PC-9 (cell line): ENCODE measurements at regions of chr6 and their contacts with region 1.

Region 1: GRCh38 chr6:125197795-125198269 is 44.3 kb downstream of the TPD52L1 start:
- DNase-seq: peak; percentile 63 to 68
- H3K4me3 ChIP-seq: no peak overlapping the region
- H3K27ac ChIP-seq: peak overlapping the region; percentile 55
- H3K4me1 ChIP-seq: peaks cover 87% of the 10 kb centered on the region
- H3K27me3 ChIP-seq: no peaks in the 10 kb centered on the region
- CTCF ChIP-seq: no peak

Region 2: DNA sequence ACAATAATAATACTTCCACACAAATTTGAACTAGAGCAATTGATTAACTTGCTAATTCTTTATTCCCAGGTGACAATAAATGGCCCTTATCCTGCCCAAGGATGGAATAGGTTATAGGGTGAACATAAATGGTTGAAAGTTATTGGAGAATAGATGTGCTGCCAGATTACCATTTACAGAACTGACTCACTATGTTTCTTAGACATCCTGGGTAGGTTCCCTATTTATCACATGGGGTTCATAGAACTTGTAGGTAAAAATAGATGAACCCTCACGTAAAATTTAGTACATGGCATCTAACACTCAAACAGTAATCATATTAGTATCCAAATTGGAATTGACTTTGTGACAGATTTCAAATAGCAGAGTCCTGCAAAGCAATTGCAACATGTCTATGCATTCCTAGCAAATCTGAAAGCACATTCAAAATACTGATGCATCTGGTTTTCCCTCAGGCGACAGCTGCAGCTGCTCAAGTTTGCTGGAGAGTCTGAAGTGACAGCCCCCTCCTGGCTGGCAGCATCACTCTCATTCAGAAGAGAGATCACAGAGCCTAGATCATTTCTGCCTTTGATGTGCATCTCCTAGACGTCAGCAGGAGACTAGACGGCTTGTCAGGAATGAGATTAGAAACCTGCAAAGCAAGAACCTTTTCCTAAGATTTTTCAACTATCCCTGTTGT is 315.8 kb before region 1 on chr6:
- CTCF ChIA-PET with region 1: no interaction called
- POLR2A ChIA-PET with region 1: no interaction called
- intact Hi-C with region 1: loop called (anchors 5 kb)
- DNase-seq: peak; percentile 29 to 77
- H3K4me3 ChIP-seq: peak overlapping the region; percentile 33; the same call in 1 of the 2 replicates
- H3K27ac ChIP-seq: peak overlapping the region; percentile 70
- H3K4me1 ChIP-seq: peaks cover 37% of the 10 kb centered on the region
- H3K27me3 ChIP-seq: no peaks in the 10 kb centered on the region
- CTCF ChIP-seq: no peak

Region 3: GRCh38 chr6:125245523-125246260 is 47.9 kb after region 1 on chr6:
- CTCF ChIA-PET with region 1: interaction called, 4 read pairs
- POLR2A ChIA-PET with region 1: interaction called, 15 read pairs
- intact Hi-C with region 1: loop called (anchors 2 kb)
- DNase-seq: peak; percentile 76 to 86
- H3K4me3 ChIP-seq: peak overlapping the region; percentile 0; the same call in 1 of the 2 replicates
- H3K27ac ChIP-seq: peak overlapping the region; percentile 60
- H3K4me1 ChIP-seq: peaks cover 32% of the 10 kb centered on the region
- H3K27me3 ChIP-seq: no peaks in the 10 kb centered on the region
- CTCF ChIP-seq: no peak

Region 4: GRCh38 chr6:125301435-125302391 is 103.9 kb after region 1 on chr6 and contains the start of gene HDDC2:
- CTCF ChIA-PET with region 1: no interaction called
- POLR2A ChIA-PET with region 1: no interaction called
- intact Hi-C with region 1: loop called (anchors 5 kb)
- DNase-seq: peak; percentile 67 to 68
- H3K4me3 ChIP-seq: peak within 1 kb of the TSS; percentile 89
- H3K27ac ChIP-seq: peak within 1 kb of the TSS; percentile 60
- H3K4me1 ChIP-seq: peaks cover 12% of the 10 kb centered on the region
- H3K27me3 ChIP-seq: no peaks in the 10 kb centered on the region
- CTCF ChIP-seq: no peak
- total RNA-seq, gene HDDC2: 50.1 and 55.2 TPM in 2 replicates